ENCODE measurements at regions of chr6 and their contacts with region 1.

Region 1: DNA sequence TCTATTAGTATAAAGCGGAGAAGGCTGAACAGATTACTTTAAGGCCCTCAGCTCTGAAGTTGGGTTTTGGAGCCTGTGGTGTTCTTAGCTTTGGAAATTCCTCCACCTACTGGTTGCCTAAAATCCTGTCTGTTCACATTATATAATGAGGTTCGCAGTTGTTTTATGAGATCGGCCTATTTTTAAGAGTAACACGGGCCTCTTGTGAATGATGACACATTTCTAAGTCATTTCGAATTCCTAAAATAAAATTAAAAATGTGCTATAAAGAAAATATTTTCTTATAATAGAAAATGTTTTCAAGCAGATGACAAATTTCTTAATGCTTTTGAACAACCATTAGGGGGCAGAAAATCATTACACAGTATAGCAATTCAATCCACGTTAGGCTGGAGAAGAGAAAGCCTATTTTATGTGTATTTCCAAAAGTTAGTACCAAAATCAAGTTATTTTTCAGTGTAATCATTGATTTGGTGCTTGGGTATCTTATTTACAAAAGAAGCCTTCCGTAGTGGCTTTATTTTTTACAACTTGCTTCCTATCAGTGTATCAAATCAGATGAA is 15.8 kb upstream of the FAM8A1 start:
- DNase-seq: peak in 3 of 9 experiments; percentile 17 to 67 (median 53)
- ATAC-seq: peak; percentile 67
- H3K4me3 ChIP-seq: no peak overlapping the region
- H3K4me3 Mint-ChIP-seq: peak overlapping the region; percentile 17
- H3K27ac ChIP-seq: no peak overlapping the region
- H3K27ac Mint-ChIP-seq: no peak overlapping the region
- H3K4me1 ChIP-seq: peaks cover 5% of the 10 kb centered on the region
- H3K4me1 Mint-ChIP-seq: peaks cover 10% of the 10 kb centered on the region
- H3K27me3 ChIP-seq: peaks cover 0 to 5% of the 10 kb centered on the region in 2 experiments
- H3K27me3 Mint-ChIP-seq: peaks cover 6% of the 10 kb centered on the region
- CTCF ChIP-seq: peak; percentile 89

Region 2: GRCh38 chr6:17156112-17156921 is 428.0 kb before region 1 on chr6:
- CTCF ChIA-PET with region 1: interaction called, 11 read pairs
- POLR2A ChIA-PET with region 1: no interaction called
- intact Hi-C with region 1: loop called (anchors 1 kb)
- DNase-seq: peak; percentile 10 to 78 (median 67)
- ATAC-seq: peak; percentile 52
- H3K4me3 ChIP-seq: no peak overlapping the region
- H3K4me3 Mint-ChIP-seq: no peak overlapping the region
- H3K27ac ChIP-seq: no peak overlapping the region
- H3K27ac Mint-ChIP-seq: no peak overlapping the region
- H3K4me1 ChIP-seq: no peaks in the 10 kb centered on the region
- H3K4me1 Mint-ChIP-seq: no peaks in the 10 kb centered on the region
- H3K27me3 ChIP-seq: no peaks in the 10 kb centered on the region
- H3K27me3 Mint-ChIP-seq: peaks cover 12% of the 10 kb centered on the region
- CTCF ChIP-seq: peak; percentile 90

Region 3: GRCh38 chr6:17454316-17455005 is 129.9 kb before region 1 on chr6:
- CTCF ChIA-PET with region 1: no interaction called
- POLR2A ChIA-PET with region 1: no interaction called
- intact Hi-C with region 1: no loop called
- DNase-seq: no peak
- ATAC-seq: no peak
- H3K4me3 ChIP-seq: no peak overlapping the region
- H3K4me3 Mint-ChIP-seq: no peak overlapping the region
- H3K27ac ChIP-seq: no peak overlapping the region
- H3K27ac Mint-ChIP-seq: no peak overlapping the region
- H3K4me1 ChIP-seq: no peaks in the 10 kb centered on the region
- H3K4me1 Mint-ChIP-seq: no peaks in the 10 kb centered on the region
- H3K27me3 ChIP-seq: no peaks in the 10 kb centered on the region
- H3K27me3 Mint-ChIP-seq: peaks cover 20% of the 10 kb centered on the region
- CTCF ChIP-seq: no peak

Region 4: GRCh38 chr6:17706580-17707370 is 122.5 kb after region 1 on chr6 and contains the start of gene NUP153:
- CTCF ChIA-PET with region 1: interaction called, 11 read pairs
- POLR2A ChIA-PET with region 1: interaction called, 3 read pairs
- intact Hi-C with region 1: loop called in 1 of 2 experiments (anchors 2 kb)
- DNase-seq: peak; percentile 98 to 100 (median 100)
- ATAC-seq: peak; percentile 77
- H3K4me3 ChIP-seq: peak within 1 kb of the TSS; percentile 84 to 96
- H3K4me3 Mint-ChIP-seq: peak within 1 kb of the TSS; percentile 88
- H3K27ac ChIP-seq: peak within 1 kb of the TSS; percentile 99
- H3K27ac Mint-ChIP-seq: peak within 1 kb of the TSS; percentile 96
- H3K4me1 ChIP-seq: peaks cover 39% of the 10 kb centered on the region
- H3K4me1 Mint-ChIP-seq: peaks cover 40% of the 10 kb centered on the region
- H3K27me3 ChIP-seq: no peaks in the 10 kb centered on the region
- H3K27me3 Mint-ChIP-seq: no peaks in the 10 kb centered on the region
- CTCF ChIP-seq: no peak
- total RNA-seq, gene NUP153: 76.4 to 77.7 TPM

Region 5: DNA sequence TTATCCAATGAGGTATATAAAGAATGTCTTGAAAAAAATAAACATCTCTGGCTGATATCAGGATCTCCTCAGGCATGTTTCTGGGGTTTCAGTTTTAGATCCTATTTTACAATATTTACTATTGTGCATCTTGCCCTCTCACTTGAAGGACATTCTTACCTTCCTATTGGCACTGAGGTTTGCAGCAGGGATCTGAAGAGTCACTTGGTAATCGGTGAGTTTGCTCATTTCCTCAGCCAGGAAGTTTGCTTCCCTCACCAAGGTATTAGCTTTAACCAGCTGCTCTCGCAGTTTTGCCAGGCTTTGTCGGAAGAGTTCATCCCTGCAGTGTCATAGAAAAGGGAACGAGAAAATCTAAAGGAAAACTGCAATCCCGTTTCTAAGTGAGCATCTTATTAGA is 224.3 kb after region 1 on chr6:
- CTCF ChIA-PET with region 1: interaction called, 43 read pairs
- POLR2A ChIA-PET with region 1: no interaction called
- intact Hi-C with region 1: loop called (anchors 1 kb)
- DNase-seq: no peak
- ATAC-seq: no peak
- H3K4me3 ChIP-seq: no peak overlapping the region
- H3K4me3 Mint-ChIP-seq: no peak overlapping the region
- H3K27ac ChIP-seq: no peak overlapping the region
- H3K27ac Mint-ChIP-seq: no peak overlapping the region
- H3K4me1 ChIP-seq: no peaks in the 10 kb centered on the region
- H3K4me1 Mint-ChIP-seq: peaks cover 3% of the 10 kb centered on the region
- H3K27me3 ChIP-seq: no peaks in the 10 kb centered on the region
- H3K27me3 Mint-ChIP-seq: peaks cover 19% of the 10 kb centered on the region
- CTCF ChIP-seq: no peak

Region 6: DNA sequence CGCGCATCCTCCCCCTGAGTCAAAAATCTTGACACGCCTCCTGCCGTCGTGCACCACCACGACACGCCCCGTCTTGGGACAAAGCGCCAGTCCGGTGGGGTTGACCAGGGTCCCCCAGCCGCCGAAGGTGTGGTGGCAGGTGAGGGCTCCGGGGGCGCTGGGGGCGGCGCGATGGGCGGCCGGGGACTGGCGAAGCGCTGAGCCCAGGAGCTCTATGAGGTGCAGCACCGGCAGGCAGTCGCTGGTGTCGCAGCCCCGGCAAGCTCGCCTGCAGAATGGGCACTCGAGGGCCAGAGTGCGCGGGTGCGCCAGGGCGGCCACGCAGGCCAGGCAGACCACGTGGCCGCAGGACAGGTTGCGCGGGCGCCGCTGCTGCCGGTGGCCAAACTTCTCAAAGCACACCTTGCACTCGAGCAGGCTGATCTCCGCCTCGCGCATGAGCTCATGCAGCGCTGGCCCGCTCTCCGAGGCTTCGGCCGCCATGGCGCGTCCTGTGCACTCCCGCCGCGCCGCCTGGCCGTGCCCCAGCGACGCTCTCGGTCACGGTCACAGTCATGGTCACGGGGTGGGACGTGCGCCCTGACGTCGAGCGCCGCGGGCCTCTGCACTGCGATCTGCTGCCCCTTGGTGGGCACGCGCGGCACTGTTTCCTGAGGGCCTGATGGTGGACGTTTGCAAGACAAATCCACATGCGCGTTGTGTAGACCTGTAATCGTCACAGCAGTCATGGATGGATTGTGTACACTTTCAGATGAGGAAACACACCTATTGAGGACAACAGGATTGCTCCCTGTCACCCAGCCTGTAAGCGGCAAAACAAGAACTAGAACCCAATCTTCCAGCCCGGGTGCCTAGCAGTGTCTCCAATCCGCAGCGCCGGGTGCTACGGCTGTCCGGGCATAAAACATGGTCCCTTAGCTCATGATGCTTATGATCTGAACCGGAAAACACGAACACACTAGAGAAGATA is 538.1 kb after region 1 on chr6 and contains the start of gene NHLRC1:
- CTCF ChIA-PET with region 1: no interaction called
- POLR2A ChIA-PET with region 1: no interaction called
- intact Hi-C with region 1: loop called in 1 of 2 experiments (anchors 10 kb)
- DNase-seq: peak; percentile 46 to 83 (median 74)
- ATAC-seq: peak; percentile 99
- H3K4me3 ChIP-seq: peak within 1 kb of the TSS; percentile 38 to 62
- H3K4me3 Mint-ChIP-seq: peak within 1 kb of the TSS; percentile 85
- H3K27ac ChIP-seq: no peak within 1 kb of the TSS
- H3K27ac Mint-ChIP-seq: peak within 1 kb of the TSS; percentile 22
- H3K4me1 ChIP-seq: peaks cover 4% of the 10 kb centered on the region
- H3K4me1 Mint-ChIP-seq: peaks cover 13% of the 10 kb centered on the region
- H3K27me3 ChIP-seq: no peaks in the 10 kb centered on the region
- H3K27me3 Mint-ChIP-seq: peaks cover 4% of the 10 kb centered on the region
- CTCF ChIP-seq: peak; percentile 65
- total RNA-seq, gene NHLRC1: 0.28 TPM in 1 of 2 experiments, not detected in the other

Region 7: DNA sequence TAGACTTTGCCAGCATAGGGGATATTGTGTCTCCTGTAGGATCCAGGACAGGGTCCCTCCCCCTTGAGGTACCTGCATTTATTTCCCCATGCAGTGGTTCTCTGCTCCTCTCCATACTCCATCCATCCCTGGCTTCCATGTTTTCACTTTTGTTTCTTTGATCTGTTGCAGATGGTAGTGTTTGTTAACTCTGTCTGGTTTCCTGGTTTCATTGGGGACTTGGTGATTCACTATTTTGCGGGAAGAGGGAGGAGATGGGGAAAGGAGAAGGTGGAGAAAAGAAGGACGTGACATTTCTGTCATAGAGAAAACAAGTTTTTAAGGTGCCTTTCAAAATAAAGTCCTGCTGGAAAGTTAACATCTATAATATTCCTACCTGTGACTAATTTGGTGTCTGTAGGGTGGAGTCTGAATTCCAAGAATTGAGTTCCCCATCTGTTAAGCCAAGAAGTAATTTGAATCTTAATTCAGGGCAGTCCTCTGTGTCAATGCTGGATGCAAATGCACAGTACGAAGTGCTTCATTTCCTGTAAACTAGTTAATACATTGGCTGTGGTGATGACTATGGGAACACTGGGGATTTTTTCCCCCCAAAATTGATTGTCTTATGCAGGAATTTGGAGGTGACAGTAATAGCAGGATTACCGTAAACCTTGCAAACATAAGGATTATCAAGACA is 796.0 kb after region 1 on chr6:
- CTCF ChIA-PET with region 1: no interaction called
- POLR2A ChIA-PET with region 1: no interaction called
- intact Hi-C with region 1: no loop called
- DNase-seq: no peak
- ATAC-seq: no peak
- H3K4me3 ChIP-seq: no peak overlapping the region
- H3K4me3 Mint-ChIP-seq: no peak overlapping the region
- H3K27ac ChIP-seq: no peak overlapping the region
- H3K27ac Mint-ChIP-seq: no peak overlapping the region
- H3K4me1 ChIP-seq: no peaks in the 10 kb centered on the region
- H3K4me1 Mint-ChIP-seq: no peaks in the 10 kb centered on the region
- H3K27me3 ChIP-seq: peaks cover 0 to 2% of the 10 kb centered on the region in 2 experiments
- H3K27me3 Mint-ChIP-seq: peaks cover 8% of the 10 kb centered on the region
- CTCF ChIP-seq: no peak

Measured in CD8-positive, alpha-beta T cell (primary cell).